ENCODE measurements at regions of chr18 and their contacts with region 1.

Region 1: DNA sequence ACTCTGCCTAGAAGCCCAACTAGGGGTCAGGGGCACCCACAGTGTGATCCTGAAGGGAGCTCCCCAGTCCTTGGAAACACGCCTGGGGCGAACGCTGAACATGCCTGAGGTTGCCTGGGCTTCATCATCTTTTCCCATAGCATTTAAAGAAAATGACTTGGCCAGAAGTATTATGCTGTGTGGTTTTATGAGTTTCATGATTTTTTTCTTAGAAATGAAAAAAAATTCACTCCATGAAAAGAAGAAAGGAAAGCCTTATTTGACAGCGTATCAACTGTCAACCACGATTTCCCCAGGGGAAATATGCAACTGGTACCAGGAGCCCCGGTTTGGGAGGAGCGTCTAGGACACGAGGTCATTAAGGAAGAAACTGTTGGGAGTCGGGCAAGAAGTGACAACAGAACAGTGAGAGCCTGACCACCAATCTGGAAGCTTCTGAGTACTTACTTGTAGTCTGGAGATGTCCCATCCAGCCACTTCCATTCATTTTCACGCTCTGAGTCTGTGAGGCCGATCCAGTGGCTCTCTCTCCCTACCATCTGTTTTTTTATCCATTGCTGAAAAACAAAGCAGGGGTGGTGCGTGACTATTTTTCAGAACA is 63.5 kb upstream of the THOC1 start:
- DNase-seq: peak in 1 of 2 donors; percentile 5
- ATAC-seq: peak in 1 of 2 donors; percentile 33
- H3K4me3 ChIP-seq: no peak overlapping the region
- H3K27ac ChIP-seq: no peak overlapping the region
- H3K4me1 ChIP-seq: peaks cover 0 to 12% of the 10 kb centered on the region in 2 donors
- H3K27me3 ChIP-seq: no peaks in the 10 kb centered on the region
- CTCF ChIP-seq: no peak
- POLR2A ChIP-seq: no peak

Region 2: DNA sequence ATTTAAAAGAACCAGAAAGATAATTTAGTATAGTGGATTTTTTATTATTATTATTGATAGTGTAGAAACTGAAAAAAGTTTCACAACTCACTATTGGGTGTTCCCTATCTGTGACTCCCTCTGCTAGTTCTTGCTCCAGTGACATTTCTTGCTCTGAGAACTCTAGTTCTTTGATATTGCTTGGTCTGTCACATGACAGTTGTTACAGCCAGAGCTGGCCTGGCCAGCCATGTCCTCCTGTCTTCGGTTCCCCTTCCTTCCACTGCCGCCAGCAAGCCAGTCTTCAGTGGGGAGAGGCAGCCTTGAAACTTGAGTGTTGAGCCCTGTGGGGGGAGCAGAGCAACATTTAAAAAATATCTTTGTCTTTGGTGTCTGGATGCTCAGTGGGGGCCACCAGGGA is 55.8 kb before region 1 on chr18:
- in situ Hi-C with region 1: loop called in 1 of 4 experiments (anchors 10 kb)
- intact Hi-C with region 1: no loop called
- DNase-seq: peak in 1 of 2 donors; percentile 13
- ATAC-seq: no peak
- H3K4me3 ChIP-seq: no peak overlapping the region
- H3K27ac ChIP-seq: no peak overlapping the region
- H3K4me1 ChIP-seq: no peaks in the 10 kb centered on the region
- H3K27me3 ChIP-seq: peaks cover 0 to 5% (median 0%) of the 10 kb centered on the region in 3 donors
- CTCF ChIP-seq: no peak
- POLR2A ChIP-seq: no peak

Region 3: GRCh38 chr18:286515-287310 is 44.6 kb before region 1 on chr18:
- in situ Hi-C with region 1: no loop called
- intact Hi-C with region 1: no loop called
- DNase-seq: no peak
- ATAC-seq: no peak
- H3K4me3 ChIP-seq: no peak overlapping the region
- H3K27ac ChIP-seq: no peak overlapping the region
- H3K4me1 ChIP-seq: no peaks in the 10 kb centered on the region
- H3K27me3 ChIP-seq: peaks cover 0 to 3% (median 0%) of the 10 kb centered on the region in 3 donors
- CTCF ChIP-seq: peak in 1 of 5 experiments; percentile 26
- POLR2A ChIP-seq: no peak

Region 4: DNA sequence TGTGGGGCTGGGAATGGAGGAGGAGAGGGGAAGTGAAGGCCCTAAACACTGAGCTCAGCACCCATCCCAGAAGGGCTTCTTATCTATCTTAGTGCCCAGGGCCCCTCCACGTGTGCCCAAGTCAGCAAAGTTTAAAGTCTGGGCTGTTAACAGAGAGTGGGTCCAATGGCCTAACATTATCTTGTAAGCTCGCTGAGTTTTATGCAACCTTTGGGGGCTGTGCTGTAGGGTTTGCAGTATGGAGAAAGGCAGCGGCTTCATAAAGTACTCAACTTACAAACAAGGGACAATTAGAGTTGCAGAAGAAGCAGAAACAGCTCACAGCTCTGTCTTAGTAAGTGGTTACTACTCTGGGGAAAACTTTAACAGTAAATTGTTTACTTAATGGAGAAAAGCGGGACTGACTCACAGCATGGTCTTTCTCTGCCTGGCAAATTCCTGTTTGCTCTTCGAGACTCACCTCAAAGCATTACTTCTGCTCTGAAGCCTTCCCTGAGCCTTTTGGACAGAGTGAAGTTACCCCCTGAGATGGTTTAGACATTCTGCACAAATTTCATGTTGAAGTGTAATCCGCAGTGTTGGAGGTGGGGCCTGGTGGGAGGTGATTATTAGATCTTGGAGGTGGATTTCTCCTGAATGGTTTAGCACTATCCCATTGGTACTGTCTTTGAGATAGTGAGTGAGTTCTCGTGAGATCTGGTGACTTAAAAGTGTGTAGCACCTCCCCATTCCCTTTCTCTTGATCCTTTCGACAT is 372.1 kb after region 1 on chr18:
- in situ Hi-C with region 1: no loop called
- intact Hi-C with region 1: no loop called
- DNase-seq: no peak
- ATAC-seq: no peak
- H3K4me3 ChIP-seq: no peak overlapping the region
- H3K27ac ChIP-seq: peak overlapping the region in 1 of 4 donors; percentile 42
- H3K4me1 ChIP-seq: no peaks in the 10 kb centered on the region
- H3K27me3 ChIP-seq: no peaks in the 10 kb centered on the region
- CTCF ChIP-seq: no peak
- POLR2A ChIP-seq: no peak

Measured in gastrocnemius medialis (tissue), 4 donors.